Ascending aorta (tissue), 2 donors: ENCODE measurements at regions of chr9 and their contacts with region 1.

Region 1: GRCh38 chr9:75238311-75238978 is 150.1 kb downstream of the OSTF1 start:
- DNase-seq: no peak
- H3K4me3 ChIP-seq: no peak overlapping the region
- H3K27ac ChIP-seq: no peak overlapping the region
- H3K4me1 ChIP-seq: no peaks in the 10 kb centered on the region
- H3K27me3 ChIP-seq: no peaks in the 10 kb centered on the region
- CTCF ChIP-seq: peak; percentile 81 to 85 (median 83)

Region 2: GRCh38 chr9:75185585-75186170 is 52.8 kb before region 1 on chr9:
- intact Hi-C with region 1: loop called (anchors 10 kb)
- DNase-seq: no peak
- H3K4me3 ChIP-seq: no peak overlapping the region
- H3K27ac ChIP-seq: no peak overlapping the region
- H3K4me1 ChIP-seq: no peaks in the 10 kb centered on the region
- H3K27me3 ChIP-seq: no peaks in the 10 kb centered on the region
- CTCF ChIP-seq: peak in 2 of 3 experiments; percentile 39 to 54

Region 3: DNA sequence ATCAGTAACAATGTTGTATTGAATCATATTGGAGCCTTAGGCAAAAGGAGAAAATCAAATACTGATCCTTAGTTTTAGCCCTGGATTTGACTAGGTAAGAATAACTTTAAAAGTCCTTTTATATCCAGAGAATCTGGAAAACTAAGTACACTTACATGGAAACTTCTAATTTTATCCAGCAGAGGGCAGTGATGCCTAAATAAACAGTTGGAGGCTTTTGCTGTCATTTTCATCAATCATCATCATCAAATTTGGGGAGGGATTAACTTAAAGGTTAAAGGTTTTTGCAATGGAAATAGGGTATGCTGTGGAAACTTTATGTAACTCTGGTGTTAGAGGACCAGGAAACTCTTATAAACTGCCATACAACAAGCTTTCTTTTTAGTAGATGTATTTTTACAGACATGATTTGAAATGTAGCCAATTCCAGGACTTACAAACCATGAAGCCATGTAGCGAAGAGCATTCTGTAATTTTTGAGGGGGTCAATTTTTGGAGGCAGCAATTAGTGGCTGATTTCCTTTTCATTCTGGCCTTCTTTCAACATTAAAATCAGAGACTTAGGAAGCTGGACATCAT is 37.5 kb before region 1 on chr9:
- intact Hi-C with region 1: loop called (anchors 1 kb)
- DNase-seq: no peak
- H3K4me3 ChIP-seq: no peak overlapping the region
- H3K27ac ChIP-seq: no peak overlapping the region
- H3K4me1 ChIP-seq: peaks cover 0 to 3% of the 10 kb centered on the region in 2 donors
- H3K27me3 ChIP-seq: no peaks in the 10 kb centered on the region
- CTCF ChIP-seq: peak; percentile 49 to 75 (median 64)

Region 4: DNA sequence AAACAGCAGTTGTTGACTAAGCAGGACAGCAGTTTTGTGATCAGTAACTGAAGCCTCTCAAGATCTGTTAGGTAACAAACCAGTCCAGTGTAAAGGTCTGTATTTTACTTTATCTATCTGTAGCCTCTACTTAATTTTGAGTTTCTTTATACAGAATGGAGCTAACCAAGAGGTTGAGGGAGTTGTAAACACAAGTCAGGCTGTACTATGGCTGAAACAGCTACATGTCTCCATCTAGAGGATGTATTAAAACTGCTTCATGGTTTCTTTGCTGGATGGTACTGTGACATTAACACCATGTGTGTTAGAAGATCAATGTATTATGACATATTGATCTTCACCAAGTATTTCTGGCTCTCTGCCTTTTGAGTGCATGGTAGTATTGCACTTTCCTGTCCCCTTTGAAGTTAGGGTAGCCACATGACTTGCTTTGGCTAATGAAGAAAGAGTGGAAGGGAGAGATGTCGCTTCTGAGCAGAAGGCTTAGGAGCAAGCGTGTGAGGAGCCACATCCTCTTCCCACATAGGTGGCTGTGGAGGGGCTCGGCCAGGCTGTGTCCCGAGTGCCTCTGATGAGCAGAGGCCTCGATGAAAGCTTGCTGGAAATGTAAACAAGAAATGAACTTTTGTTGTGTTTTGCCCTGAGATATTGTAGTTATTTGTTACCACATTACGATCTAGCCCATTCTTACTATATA is 1420.2 kb after region 1 on chr9:
- intact Hi-C with region 1: loop called (anchors 10 kb)
- DNase-seq: no peak
- H3K4me3 ChIP-seq: no peak overlapping the region
- H3K27ac ChIP-seq: peak overlapping the region; percentile 5 to 6
- H3K4me1 ChIP-seq: peaks cover 0 to 30% of the 10 kb centered on the region in 2 donors
- H3K27me3 ChIP-seq: no peaks in the 10 kb centered on the region
- CTCF ChIP-seq: peak in 2 of 3 experiments; percentile 19 to 38

Region 5: GRCh38 chr9:77020438-77021290 is 1782.2 kb after region 1 on chr9:
- intact Hi-C with region 1: loop called (anchors 10 kb)
- DNase-seq: no peak
- H3K4me3 ChIP-seq: peak overlapping the region; percentile 46 to 50
- H3K27ac ChIP-seq: no peak overlapping the region
- H3K4me1 ChIP-seq: peaks cover 4 to 23% of the 10 kb centered on the region in 2 donors
- H3K27me3 ChIP-seq: peaks cover 68% of the 10 kb centered on the region
- CTCF ChIP-seq: no peak